Heart left ventricle (tissue), 16 donors: ENCODE measurements at regions of chr14 and their contacts with region 1.

Region 1: DNA sequence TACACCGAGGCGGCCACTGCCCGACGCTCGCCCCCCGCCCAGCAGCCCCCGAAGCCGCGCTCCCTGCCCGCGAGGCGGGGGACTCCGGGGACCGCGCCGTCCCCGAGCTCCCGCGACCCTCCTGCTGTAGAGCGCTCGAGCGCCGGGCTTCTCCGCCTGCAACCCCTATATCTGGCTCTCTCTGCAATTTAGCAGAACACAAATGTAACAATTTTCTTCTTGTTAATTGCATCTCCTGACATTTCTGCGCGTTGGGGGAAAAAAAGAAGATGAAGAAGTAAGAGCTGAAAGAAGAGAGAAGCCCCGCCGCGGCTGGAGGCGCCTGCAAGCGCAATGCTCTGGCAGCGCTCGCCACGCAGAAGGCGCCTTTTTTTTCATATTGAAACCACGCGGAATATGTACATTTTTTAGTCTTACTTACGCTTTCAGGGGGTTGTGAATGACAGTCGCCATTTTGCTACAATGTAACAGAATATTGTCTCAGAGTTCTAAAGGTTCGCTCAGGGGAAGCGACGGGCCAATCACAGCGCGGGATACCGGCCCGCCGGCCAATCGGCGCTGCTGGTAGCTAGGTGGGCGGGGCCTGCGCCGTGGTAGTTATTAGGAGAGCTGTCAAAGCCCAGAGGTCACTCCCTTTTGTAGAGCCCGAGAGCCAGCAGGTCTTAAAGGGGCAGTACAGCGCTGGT is at the start of gene DPF3:
- DNase-seq: peak; percentile 96 to 98 (median 97)
- ATAC-seq: peak; percentile 94 to 97 (median 96)
- H3K4me3 ChIP-seq: peak within 1 kb of the TSS; percentile 56 to 98 (median 84)
- H3K27ac ChIP-seq: peak within 1 kb of the TSS; percentile 72 to 93 (median 84)
- H3K4me1 ChIP-seq: peaks cover 0 to 39% (median 19%) of the 10 kb centered on the region in 12 donors
- H3K27me3 ChIP-seq: peaks cover 0 to 47% (median 4%) of the 10 kb centered on the region in 9 donors
- CTCF ChIP-seq: no peak
- POLR2A ChIP-seq: peak in 1 of 2 donors; percentile 92
- total RNA-seq, gene DPF3: 20.5 to 53.8 (median 40.4) TPM

Region 2: DNA sequence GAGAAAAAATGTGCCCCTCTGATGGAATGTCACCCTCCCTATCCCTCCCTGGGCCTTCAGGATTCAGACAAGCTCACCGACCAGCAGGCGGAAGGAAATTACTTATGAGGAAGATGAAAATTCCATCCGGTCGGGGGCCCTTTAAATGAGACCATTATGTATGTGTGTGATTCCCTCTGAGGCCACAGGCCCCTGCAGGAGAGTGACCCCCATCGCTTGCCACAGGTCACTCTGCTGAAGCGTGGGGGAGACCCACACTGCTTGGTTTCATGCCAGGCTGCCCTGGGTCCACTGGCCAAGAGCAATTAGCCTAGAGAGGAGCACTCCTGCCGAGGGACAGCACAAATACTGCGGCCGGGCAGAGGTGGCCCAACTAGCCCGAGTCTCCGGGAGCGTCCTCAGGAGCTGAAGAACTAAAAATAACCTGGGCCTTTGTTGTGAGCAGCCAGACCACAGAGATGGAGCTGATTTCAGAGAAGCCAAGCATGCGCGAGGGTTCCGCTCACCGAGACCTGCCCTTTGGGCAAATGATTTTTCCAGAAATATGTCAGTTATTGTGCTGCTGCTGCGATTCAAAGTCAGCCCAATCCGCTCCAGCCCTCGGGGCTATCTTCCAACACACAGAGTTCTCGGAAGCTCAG is 276.3 kb before region 1 on chr14:
- intact Hi-C with region 1: loop called in 2 of 10 experiments (anchors 5 to 10 kb)
- DNase-seq: peak; percentile 59 to 74 (median 63)
- ATAC-seq: peak; percentile 39 to 67 (median 58)
- H3K4me3 ChIP-seq: peak overlapping the region in 4 of 12 donors; percentile 0 to 16 (median 8)
- H3K27ac ChIP-seq: peak overlapping the region; percentile 65 to 92 (median 84)
- H3K4me1 ChIP-seq: peaks cover 5 to 74% (median 61%) of the 10 kb centered on the region in 12 donors
- H3K27me3 ChIP-seq: no peaks in the 10 kb centered on the region
- CTCF ChIP-seq: no peak
- POLR2A ChIP-seq: no peak

Region 3: GRCh38 chr14:72714094-72714493 is 179.7 kb before region 1 on chr14:
- intact Hi-C with region 1: loop called in 7 of 10 experiments (anchors 5 to 10 kb)
- DNase-seq: no peak
- ATAC-seq: no peak
- H3K4me3 ChIP-seq: no peak overlapping the region
- H3K27ac ChIP-seq: peak overlapping the region in 11 of 12 donors; percentile 74 to 93 (median 89)
- H3K4me1 ChIP-seq: peaks cover 0 to 66% (median 32%) of the 10 kb centered on the region in 12 donors
- H3K27me3 ChIP-seq: no peaks in the 10 kb centered on the region
- CTCF ChIP-seq: no peak
- POLR2A ChIP-seq: no peak

Region 4: GRCh38 chr14:72736314-72736715 is 157.5 kb before region 1 on chr14:
- intact Hi-C with region 1: loop called in 1 of 10 experiments (anchors 5 kb)
- DNase-seq: no peak
- ATAC-seq: peak in 3 of 4 donors; percentile 36 to 42 (median 38)
- H3K4me3 ChIP-seq: no peak overlapping the region
- H3K27ac ChIP-seq: peak overlapping the region in 1 of 12 donors; percentile 7
- H3K4me1 ChIP-seq: peaks cover 0 to 38% (median 5%) of the 10 kb centered on the region in 12 donors
- H3K27me3 ChIP-seq: no peaks in the 10 kb centered on the region
- CTCF ChIP-seq: peak in 3 of 12 donors; percentile 10 to 28 (median 25)
- POLR2A ChIP-seq: no peak

Region 5: DNA sequence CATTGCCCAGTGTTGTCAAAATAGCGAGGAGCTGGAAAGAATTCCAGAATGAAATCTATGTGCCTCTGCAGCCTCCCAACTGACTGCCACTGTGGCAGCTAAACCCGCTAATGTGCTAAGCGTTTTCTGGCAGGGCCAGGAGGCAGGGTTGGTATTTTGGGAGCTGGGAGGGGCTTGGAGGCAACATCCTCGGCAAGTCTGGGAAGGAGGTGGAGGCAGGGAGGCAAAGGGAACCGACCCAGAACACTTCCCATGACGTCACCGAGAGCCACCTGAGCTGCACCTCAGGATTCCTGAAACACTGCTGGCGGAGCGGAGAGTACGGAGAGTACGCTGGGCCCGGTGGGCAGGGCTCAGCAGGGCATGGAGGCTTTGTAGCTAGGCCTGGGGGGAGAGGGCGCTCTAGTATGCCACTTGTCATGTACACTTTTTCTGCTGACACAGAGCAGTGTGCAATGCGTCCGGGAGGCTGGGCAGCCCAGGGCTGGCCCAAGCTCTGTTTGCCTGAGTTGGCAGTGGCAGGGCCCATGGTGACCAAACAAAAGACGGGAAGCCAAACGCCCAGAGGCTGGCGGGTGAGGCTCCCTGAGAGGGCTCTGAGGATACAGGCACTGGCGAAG is 81.4 kb before region 1 on chr14:
- intact Hi-C with region 1: loop called in 7 of 10 experiments (anchors 1 to 10 kb)
- DNase-seq: peak; percentile 71 to 95 (median 79)
- ATAC-seq: peak; percentile 93 to 96 (median 94)
- H3K4me3 ChIP-seq: peak overlapping the region in 3 of 12 donors; percentile 0 to 29 (median 9)
- H3K27ac ChIP-seq: peak overlapping the region; percentile 72 to 95 (median 81)
- H3K4me1 ChIP-seq: peaks cover 0 to 75% (median 28%) of the 10 kb centered on the region in 12 donors
- H3K27me3 ChIP-seq: no peaks in the 10 kb centered on the region
- CTCF ChIP-seq: peak in 2 of 12 donors; percentile 28 to 32
- POLR2A ChIP-seq: peak in 1 of 2 donors; percentile 40

Region 6: GRCh38 chr14:72830786-72831594 is 62.8 kb before region 1 on chr14:
- intact Hi-C with region 1: loop called in 5 of 10 experiments (anchors 1 to 10 kb)
- DNase-seq: peak in 2 of 5 donors; percentile 37 to 39
- ATAC-seq: peak in 1 of 4 donors; percentile 37
- H3K4me3 ChIP-seq: peak overlapping the region in 6 of 12 donors; percentile 4 to 29 (median 20)
- H3K27ac ChIP-seq: peak overlapping the region; percentile 58 to 93 (median 74)
- H3K4me1 ChIP-seq: peaks cover 0 to 51% (median 11%) of the 10 kb centered on the region in 12 donors
- H3K27me3 ChIP-seq: no peaks in the 10 kb centered on the region
- CTCF ChIP-seq: no peak
- POLR2A ChIP-seq: no peak